ENCODE measurements at regions of chr17 and their contacts with region 1.

Region 1: GRCh38 chr17:60169921-60170742 is 20.4 kb downstream of the CA4 start:
- DNase-seq: peak; percentile 33
- ATAC-seq: peak; percentile 65
- H3K4me3 Mint-ChIP-seq: no peak overlapping the region
- H3K27ac Mint-ChIP-seq: peak overlapping the region; percentile 73
- H3K4me1 Mint-ChIP-seq: peaks cover 27% of the 10 kb centered on the region
- H3K27me3 Mint-ChIP-seq: no peaks in the 10 kb centered on the region
- CTCF ChIP-seq: no peak

Region 2: GRCh38 chr17:60142872-60143499 is 27.1 kb before region 1 on chr17:
- CTCF ChIA-PET with region 1: interaction called, 11 read pairs
- POLR2A ChIA-PET with region 1: no interaction called
- intact Hi-C with region 1: no loop called
- DNase-seq: peak; percentile 94
- ATAC-seq: peak; percentile 85
- H3K4me3 Mint-ChIP-seq: peak overlapping the region; percentile 30
- H3K27ac Mint-ChIP-seq: no peak overlapping the region
- H3K4me1 Mint-ChIP-seq: peaks cover 12% of the 10 kb centered on the region
- H3K27me3 Mint-ChIP-seq: peaks cover 89% of the 10 kb centered on the region
- CTCF ChIP-seq: peak; percentile 76